ENCODE measurements at regions of chr10 and their contacts with region 1.

Region 1: GRCh38 chr10:103983367-103983911 is 16.5 kb downstream of the SLK start:
- DNase-seq: peak; percentile 40
- ATAC-seq: peak; percentile 86
- H3K4me3 ChIP-seq: no peak overlapping the region
- H3K27ac ChIP-seq: peak overlapping the region; percentile 65
- H3K4me1 ChIP-seq: peaks cover 7% of the 10 kb centered on the region; the same call in 1 of the 2 replicates
- H3K27me3 ChIP-seq: no peaks in the 10 kb centered on the region
- CTCF ChIP-seq: no peak
- EP300 ChIP-seq: no peak
- POLR2A ChIP-seq: no peak
- RAD21 ChIP-seq: no peak

Region 2: GRCh38 chr10:103966671-103967447 is 16.6 kb before region 1 on chr10 and contains the start of gene SLK:
- CTCF ChIA-PET with region 1: interaction called, 8 read pairs
- POLR2A ChIA-PET with region 1: interaction called, 5 read pairs
- RAD21 ChIA-PET with region 1: interaction called, 15 read pairs
- SMC1A ChIA-PET with region 1: interaction called, 9 read pairs
- in situ Hi-C with region 1: no loop called
- intact Hi-C with region 1: no loop called
- DNase-seq: no peak
- ATAC-seq: peak; percentile 75
- H3K4me3 ChIP-seq: peak within 1 kb of the TSS; percentile 87
- H3K27ac ChIP-seq: peak within 1 kb of the TSS; percentile 77
- H3K4me1 ChIP-seq: no peaks in the 10 kb centered on the region; the same call in 1 of the 2 replicates
- H3K27me3 ChIP-seq: no peaks in the 10 kb centered on the region
- CTCF ChIP-seq: no peak
- EP300 ChIP-seq: no peak
- POLR2A ChIP-seq: peak; percentile 92
- RAD21 ChIP-seq: no peak
- polyA plus RNA-seq, gene SLK: 6.0 to 6.4 TPM

Region 3: GRCh38 chr10:104016661-104017060 is 33.2 kb after region 1 on chr10:
- CTCF ChIA-PET with region 1: interaction called, 4 read pairs
- POLR2A ChIA-PET with region 1: no interaction called
- RAD21 ChIA-PET with region 1: no interaction called
- SMC1A ChIA-PET with region 1: interaction called, 15 read pairs
- in situ Hi-C with region 1: no loop called
- intact Hi-C with region 1: no loop called
- DNase-seq: no peak
- ATAC-seq: no peak
- H3K4me3 ChIP-seq: no peak overlapping the region
- H3K27ac ChIP-seq: no peak overlapping the region
- H3K4me1 ChIP-seq: no peaks in the 10 kb centered on the region
- H3K27me3 ChIP-seq: no peaks in the 10 kb centered on the region
- CTCF ChIP-seq: no peak
- EP300 ChIP-seq: no peak
- POLR2A ChIP-seq: no peak
- RAD21 ChIP-seq: no peak

Region 4: DNA sequence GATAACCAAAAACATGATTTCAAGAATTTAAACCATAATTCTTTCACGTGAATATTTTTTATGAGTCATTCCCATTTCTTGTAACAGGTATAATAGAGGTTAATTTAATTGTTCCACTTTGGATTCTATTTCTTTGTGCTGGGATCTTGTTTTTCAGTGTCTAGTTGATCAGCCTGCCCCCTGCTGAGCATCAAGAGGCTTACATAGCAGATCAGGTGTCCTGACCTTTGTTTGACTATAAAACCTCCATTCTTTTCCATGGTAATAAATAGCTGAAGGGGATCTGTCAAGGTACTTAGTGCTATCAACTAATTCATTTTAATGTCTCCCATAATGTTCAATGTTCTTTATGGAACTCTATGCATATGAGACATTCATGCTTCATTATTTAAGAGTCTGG is 97.3 kb after region 1 on chr10:
- CTCF ChIA-PET with region 1: interaction called, 11 read pairs
- POLR2A ChIA-PET with region 1: no interaction called
- RAD21 ChIA-PET with region 1: no interaction called
- SMC1A ChIA-PET with region 1: interaction called, 5 read pairs
- in situ Hi-C with region 1: no loop called
- intact Hi-C with region 1: no loop called
- DNase-seq: no peak
- ATAC-seq: peak; percentile 69
- H3K4me3 ChIP-seq: no peak overlapping the region
- H3K27ac ChIP-seq: no peak overlapping the region
- H3K4me1 ChIP-seq: no peaks in the 10 kb centered on the region
- H3K27me3 ChIP-seq: no peaks in the 10 kb centered on the region
- CTCF ChIP-seq: peak; percentile 47 to 53 (median 52); a peak in 5 of 6 replicates
- EP300 ChIP-seq: no peak
- POLR2A ChIP-seq: no peak
- RAD21 ChIP-seq: peak; percentile 46

Measured in GM12878 (cell line).